Sciatic nerve (tissue), 2 donors: ENCODE measurements at regions of chr9 and their contacts with region 1.

Region 1: GRCh38 chr9:115540091-115540490 is 422.1 kb upstream of the TNC start:
- DNase-seq: no peak
- ATAC-seq: no peak

Region 2: GRCh38 chr9:117095081-117095480 is 1555.0 kb after region 1 on chr9:
- intact Hi-C with region 1: loop called (anchors 5 kb)
- DNase-seq: no peak
- ATAC-seq: no peak